Caco-2 (cell line): ENCODE measurements at regions of chr7 and their contacts with region 1.

Region 1: DNA sequence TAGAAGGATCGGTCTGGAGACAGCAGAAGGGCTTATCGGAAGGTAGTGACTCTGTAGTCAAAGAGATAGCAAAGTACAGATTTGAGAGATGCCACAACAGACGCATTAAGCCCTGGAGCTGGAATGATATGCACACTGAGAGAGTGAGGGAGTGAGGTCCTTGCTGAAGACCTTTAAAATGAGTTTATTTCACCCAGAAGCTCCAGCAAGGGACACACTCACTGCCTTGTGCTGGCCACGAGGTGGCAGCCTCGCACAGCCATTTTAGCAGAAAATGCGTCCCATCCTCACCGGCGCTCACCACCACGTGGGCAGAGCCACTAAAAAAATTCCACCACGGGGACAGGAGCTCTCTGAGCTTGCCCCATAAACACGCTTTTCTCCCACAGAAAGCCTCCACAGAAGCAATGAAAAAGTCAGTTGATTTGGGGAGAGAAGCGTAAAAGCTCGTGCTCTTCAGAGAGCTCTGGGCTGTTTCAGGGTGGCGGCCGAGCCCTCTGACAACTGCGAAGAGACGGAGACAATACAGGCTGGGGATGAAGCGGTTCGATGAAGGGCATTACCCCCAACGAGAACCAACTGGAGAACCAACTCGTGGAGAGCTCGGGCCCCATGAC is 163.0 kb upstream of the KLF14 start:
- DNase-seq: peak; percentile 80 to 84
- H3K4me3 ChIP-seq: no peak overlapping the region
- H3K4me3 Mint-ChIP-seq: peak overlapping the region; percentile 21
- H3K27ac Mint-ChIP-seq: peak overlapping the region; percentile 78
- H3K4me1 ChIP-seq: peaks cover 47% of the 10 kb centered on the region
- H3K4me1 Mint-ChIP-seq: peaks cover 35% of the 10 kb centered on the region
- H3K27me3 ChIP-seq: no peaks in the 10 kb centered on the region
- H3K27me3 Mint-ChIP-seq: no peaks in the 10 kb centered on the region
- CTCF ChIP-seq: peak; percentile 82 to 88

Region 2: GRCh38 chr7:130875265-130875741 is 21.7 kb before region 1 on chr7:
- CTCF ChIA-PET with region 1: interaction called, 20 read pairs
- POLR2A ChIA-PET with region 1: no interaction called
- intact Hi-C with region 1: loop called (anchors 1 kb)
- DNase-seq: peak; percentile 75 to 86
- H3K4me3 ChIP-seq: no peak overlapping the region
- H3K4me3 Mint-ChIP-seq: no peak overlapping the region
- H3K27ac Mint-ChIP-seq: no peak overlapping the region
- H3K4me1 ChIP-seq: no peaks in the 10 kb centered on the region
- H3K4me1 Mint-ChIP-seq: no peaks in the 10 kb centered on the region
- H3K27me3 ChIP-seq: no peaks in the 10 kb centered on the region
- H3K27me3 Mint-ChIP-seq: no peaks in the 10 kb centered on the region
- CTCF ChIP-seq: peak; percentile 90 to 98

Region 3: DNA sequence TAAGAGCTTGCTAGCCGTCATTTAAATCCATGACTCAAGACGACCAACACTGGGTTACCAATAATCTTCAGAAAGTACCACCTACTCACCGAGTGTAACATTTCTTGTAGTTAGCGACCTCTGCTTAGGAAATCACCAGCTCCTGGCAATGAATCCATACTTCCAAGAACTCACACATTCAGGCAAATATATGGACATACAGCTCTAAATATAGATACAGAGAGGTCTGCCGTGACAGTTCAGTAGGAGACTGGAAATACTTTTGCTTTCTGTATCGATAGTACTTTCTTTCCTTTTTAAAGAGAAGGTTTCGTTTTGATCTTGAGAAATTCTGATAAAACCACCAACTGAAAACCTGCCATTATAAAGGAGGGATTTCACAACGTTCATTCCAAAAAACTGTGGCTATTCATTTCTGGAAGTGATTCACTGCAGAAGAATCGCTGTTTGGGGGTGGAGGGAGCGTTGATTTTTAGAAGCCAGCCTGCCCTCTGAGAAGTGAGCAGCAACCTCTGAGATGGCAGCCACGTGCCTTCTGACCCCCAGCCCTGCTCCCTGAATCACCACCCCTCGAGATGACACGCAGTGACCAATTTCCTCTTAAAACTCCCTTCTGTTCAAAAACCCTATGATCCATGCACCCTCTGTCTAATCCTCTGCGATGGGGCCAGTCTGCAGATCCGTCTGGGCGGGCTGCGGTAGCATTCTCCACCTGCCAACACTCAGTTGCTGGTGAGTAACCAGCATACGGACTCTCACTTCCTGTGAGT is 16.0 kb after region 1 on chr7:
- CTCF ChIA-PET with region 1: interaction called, 27 read pairs
- POLR2A ChIA-PET with region 1: interaction called, 15 read pairs
- intact Hi-C with region 1: loop called (anchors 1 kb)
- DNase-seq: peak; percentile 47 to 55
- H3K4me3 ChIP-seq: peak overlapping the region; percentile 48
- H3K4me3 Mint-ChIP-seq: peak overlapping the region; percentile 94
- H3K27ac Mint-ChIP-seq: peak overlapping the region; percentile 95
- H3K4me1 ChIP-seq: peaks cover 28% of the 10 kb centered on the region
- H3K4me1 Mint-ChIP-seq: peaks cover 37% of the 10 kb centered on the region
- H3K27me3 ChIP-seq: no peaks in the 10 kb centered on the region
- H3K27me3 Mint-ChIP-seq: no peaks in the 10 kb centered on the region
- CTCF ChIP-seq: no peak

Region 4: DNA sequence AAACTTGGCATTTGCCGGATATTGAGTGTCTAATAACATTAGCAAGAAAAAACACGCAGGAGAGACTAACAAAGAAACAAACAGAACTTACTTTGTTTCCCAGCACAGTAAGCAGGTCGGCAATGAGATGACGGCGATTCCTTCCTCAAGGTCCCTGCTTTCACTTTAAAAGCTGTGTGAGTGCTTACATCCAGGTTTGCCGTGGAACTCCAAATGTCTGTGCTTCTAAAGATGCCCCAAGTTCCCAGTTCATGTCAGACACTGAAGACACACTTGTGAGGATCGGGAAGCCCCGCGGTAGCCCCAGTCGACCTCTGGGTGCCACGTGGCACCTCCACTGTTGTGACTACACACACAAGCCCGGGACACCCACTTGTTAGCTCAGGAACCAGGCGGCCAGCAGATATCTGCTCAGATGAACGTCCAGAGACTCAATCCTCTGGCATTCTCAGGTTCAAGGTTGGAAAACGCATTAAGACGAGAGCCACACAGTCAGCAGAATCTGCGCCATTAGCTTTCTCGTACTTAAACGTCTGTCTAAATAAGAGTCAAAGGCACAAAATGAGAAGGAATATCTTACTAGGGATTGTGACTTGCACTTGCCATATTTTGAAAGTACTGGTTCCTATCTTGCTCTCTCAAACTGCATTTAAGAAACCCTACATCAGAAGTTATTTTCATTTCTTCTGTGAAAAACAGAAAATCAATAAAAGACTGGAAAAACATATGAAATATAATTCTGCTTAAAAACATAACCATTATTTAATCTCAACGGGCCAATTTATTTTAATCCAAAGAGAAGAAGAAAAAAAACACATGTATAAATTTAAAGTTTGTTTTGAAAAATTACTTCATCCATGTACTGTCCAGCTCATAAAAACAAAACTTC is 44.6 kb after region 1 on chr7:
- CTCF ChIA-PET with region 1: interaction called, 10 read pairs
- POLR2A ChIA-PET with region 1: interaction called, 7 read pairs
- intact Hi-C with region 1: loop called (anchors 1 kb)
- DNase-seq: peak; percentile 66 to 76
- H3K4me3 ChIP-seq: peak overlapping the region; percentile 45
- H3K4me3 Mint-ChIP-seq: peak overlapping the region; percentile 91
- H3K27ac Mint-ChIP-seq: peak overlapping the region; percentile 96
- H3K4me1 ChIP-seq: peaks cover 7% of the 10 kb centered on the region; the same call in 1 of the 2 replicates
- H3K4me1 Mint-ChIP-seq: peaks cover 16% of the 10 kb centered on the region
- H3K27me3 ChIP-seq: no peaks in the 10 kb centered on the region
- H3K27me3 Mint-ChIP-seq: no peaks in the 10 kb centered on the region
- CTCF ChIP-seq: no peak

Region 5: GRCh38 chr7:130982160-130982638 is 85.2 kb after region 1 on chr7:
- CTCF ChIA-PET with region 1: interaction called, 33 read pairs
- POLR2A ChIA-PET with region 1: no interaction called
- intact Hi-C with region 1: loop called (anchors 1 kb)
- DNase-seq: peak in 1 of 2 experiments; percentile 43
- H3K4me3 ChIP-seq: no peak overlapping the region
- H3K4me3 Mint-ChIP-seq: no peak overlapping the region
- H3K27ac Mint-ChIP-seq: no peak overlapping the region
- H3K4me1 ChIP-seq: peaks cover 23% of the 10 kb centered on the region
- H3K4me1 Mint-ChIP-seq: peaks cover 10% of the 10 kb centered on the region
- H3K27me3 ChIP-seq: no peaks in the 10 kb centered on the region
- H3K27me3 Mint-ChIP-seq: no peaks in the 10 kb centered on the region
- CTCF ChIP-seq: peak; percentile 51 to 79

Region 6: DNA sequence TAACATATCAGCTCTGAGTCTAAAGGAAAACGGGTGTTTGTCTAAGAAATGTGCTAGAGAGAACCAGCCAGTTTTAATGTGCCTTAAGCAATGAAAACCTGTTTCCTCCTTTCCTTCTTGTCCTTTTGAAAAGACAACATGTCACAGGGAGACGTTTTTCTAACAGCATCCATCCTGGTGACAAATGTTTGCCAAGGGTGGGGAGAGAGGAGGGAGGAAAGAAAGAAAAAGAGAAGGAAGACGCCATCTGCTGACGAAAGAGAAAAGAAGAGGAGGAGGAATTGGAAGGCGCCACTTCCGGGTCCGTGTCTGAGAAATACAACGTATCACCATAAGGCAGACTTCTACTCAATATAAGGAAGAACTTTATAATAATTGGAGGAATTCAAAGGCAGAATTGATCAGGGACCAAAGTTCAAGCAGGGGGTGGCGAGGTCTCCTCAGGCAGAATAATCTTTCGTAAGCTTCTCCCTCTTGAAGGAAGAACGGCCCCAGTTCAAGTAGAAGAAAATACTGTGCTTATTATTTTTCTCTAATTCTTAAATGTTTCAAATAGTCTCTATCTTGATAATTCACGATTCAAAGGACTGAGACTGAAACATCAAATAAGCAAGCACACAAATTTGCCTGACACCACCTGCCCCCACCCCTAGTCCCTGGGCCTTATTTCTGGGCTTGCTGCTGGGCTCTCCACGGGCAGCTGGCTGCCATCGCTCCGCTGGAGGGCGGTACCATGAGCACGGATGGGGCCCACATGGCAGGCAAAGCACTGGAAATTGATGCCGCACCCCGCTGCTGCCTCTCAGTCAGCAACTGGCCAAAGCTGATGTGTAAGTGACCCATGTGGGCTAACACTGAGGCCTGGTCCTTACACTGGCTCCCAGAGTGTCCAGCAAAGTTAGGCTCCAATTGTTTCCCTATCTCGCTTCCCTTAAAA is 110.7 kb after region 1 on chr7:
- CTCF ChIA-PET with region 1: interaction called, 24 read pairs
- POLR2A ChIA-PET with region 1: no interaction called
- intact Hi-C with region 1: loop called (anchors 1 kb)
- DNase-seq: peak; percentile 80 to 81
- H3K4me3 ChIP-seq: no peak overlapping the region
- H3K4me3 Mint-ChIP-seq: no peak overlapping the region
- H3K27ac Mint-ChIP-seq: peak overlapping the region; percentile 18
- H3K4me1 ChIP-seq: peaks cover 8% of the 10 kb centered on the region; the same call in 1 of the 2 replicates
- H3K4me1 Mint-ChIP-seq: no peaks in the 10 kb centered on the region
- H3K27me3 ChIP-seq: no peaks in the 10 kb centered on the region
- H3K27me3 Mint-ChIP-seq: no peaks in the 10 kb centered on the region
- CTCF ChIP-seq: peak; percentile 53 to 57